Gastrocnemius medialis (tissue), 4 donors: ENCODE measurements at regions of chr2 and their contacts with region 1.

Region 1: GRCh38 chr2:237413777-237414661 is at the start of gene COL6A3:
- DNase-seq: peak; percentile 53 to 74
- ATAC-seq: peak; percentile 45 to 52
- H3K4me3 ChIP-seq: peak within 1 kb of the TSS; percentile 27 to 54 (median 36)
- H3K27ac ChIP-seq: peak within 1 kb of the TSS; percentile 71 to 80 (median 77)
- H3K4me1 ChIP-seq: peaks cover 0 to 4% of the 10 kb centered on the region in 2 donors
- H3K27me3 ChIP-seq: no peaks in the 10 kb centered on the region
- CTCF ChIP-seq: no peak
- POLR2A ChIP-seq: peak; percentile 21 to 54
- total RNA-seq, gene COL6A3: 45.3 to 150 (median 108) TPM

Region 2: DNA sequence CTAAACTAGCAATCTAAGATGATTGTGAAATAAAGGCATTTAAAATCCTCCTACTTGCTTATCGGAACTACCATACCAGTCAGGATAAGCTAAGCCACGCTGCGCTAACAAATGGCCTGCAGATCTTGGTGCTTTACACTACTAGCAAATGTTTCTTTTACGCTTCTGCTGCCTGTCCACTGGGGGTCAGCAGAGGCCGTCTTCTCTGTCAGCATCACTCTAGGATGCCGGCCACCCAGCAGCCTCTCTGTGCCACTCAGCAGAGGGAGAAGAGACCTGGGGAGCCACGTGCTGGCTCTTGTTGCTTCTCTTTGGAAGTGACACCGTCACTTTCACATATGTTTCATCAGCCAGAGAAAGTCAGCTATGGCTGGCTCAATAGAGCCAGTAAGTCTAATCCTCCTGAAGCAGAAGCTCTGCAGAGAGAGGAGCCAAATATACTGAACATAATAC is 291.8 kb before region 1 on chr2:
- in situ Hi-C with region 1: loop called in 2 of 4 experiments (anchors 10 kb)
- intact Hi-C with region 1: loop called (anchors 5 kb)
- DNase-seq: peak; percentile 49 to 73
- ATAC-seq: peak; percentile 54 to 76
- H3K4me3 ChIP-seq: no peak overlapping the region
- H3K27ac ChIP-seq: peak overlapping the region in 2 of 4 donors; percentile 24 to 39
- H3K4me1 ChIP-seq: peaks cover 11 to 13% of the 10 kb centered on the region in 2 donors
- H3K27me3 ChIP-seq: no peaks in the 10 kb centered on the region
- CTCF ChIP-seq: peak; percentile 66 to 77 (median 70)
- POLR2A ChIP-seq: no peak

Region 3: DNA sequence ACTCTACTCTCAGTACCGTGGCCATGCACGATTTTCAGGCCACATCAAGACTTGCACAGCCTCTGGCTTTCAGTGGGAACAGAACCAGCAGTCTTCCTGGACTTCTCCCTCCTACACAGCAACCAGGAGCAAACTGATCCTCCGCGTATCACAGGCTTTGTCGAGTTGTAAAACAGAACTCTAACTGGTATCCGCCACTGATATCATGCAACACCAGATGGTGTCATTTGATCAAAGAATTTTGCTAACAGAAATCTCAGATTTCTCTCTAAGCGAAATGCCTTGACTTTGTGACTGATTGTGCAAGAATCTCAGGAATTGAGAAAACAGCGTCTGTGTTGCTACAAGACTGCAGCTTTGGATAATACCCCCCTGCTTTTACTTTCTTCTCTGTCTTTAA is 242.6 kb before region 1 on chr2:
- in situ Hi-C with region 1: loop called in 1 of 4 experiments (anchors 10 kb)
- intact Hi-C with region 1: loop called (anchors 2 kb)
- DNase-seq: peak in 1 of 2 donors; percentile 43
- ATAC-seq: peak; percentile 81 to 83
- H3K4me3 ChIP-seq: no peak overlapping the region
- H3K27ac ChIP-seq: peak overlapping the region; percentile 54 to 66 (median 56)
- H3K4me1 ChIP-seq: peaks cover 0 to 4% of the 10 kb centered on the region in 2 donors
- H3K27me3 ChIP-seq: no peaks in the 10 kb centered on the region
- CTCF ChIP-seq: no peak
- POLR2A ChIP-seq: peak in 1 of 2 donors; percentile 21

Region 4: GRCh38 chr2:237231593-237231992 is 182.4 kb before region 1 on chr2:
- in situ Hi-C with region 1: no loop called
- intact Hi-C with region 1: loop called (anchors 5 kb)
- DNase-seq: peak in 1 of 2 donors; percentile 64
- ATAC-seq: peak; percentile 1 to 12
- H3K4me3 ChIP-seq: no peak overlapping the region
- H3K27ac ChIP-seq: peak overlapping the region; percentile 56 to 75 (median 66)
- H3K4me1 ChIP-seq: peaks cover 11 to 29% of the 10 kb centered on the region in 2 donors
- H3K27me3 ChIP-seq: no peaks in the 10 kb centered on the region
- CTCF ChIP-seq: no peak
- POLR2A ChIP-seq: no peak

Region 5: GRCh38 chr2:237374284-237375060 is 39.5 kb before region 1 on chr2:
- in situ Hi-C with region 1: no loop called
- intact Hi-C with region 1: no loop called
- DNase-seq: no peak
- ATAC-seq: no peak
- H3K4me3 ChIP-seq: no peak overlapping the region
- H3K27ac ChIP-seq: peak overlapping the region in 1 of 4 donors; percentile 9
- H3K4me1 ChIP-seq: no peaks in the 10 kb centered on the region
- H3K27me3 ChIP-seq: no peaks in the 10 kb centered on the region
- CTCF ChIP-seq: no peak
- POLR2A ChIP-seq: no peak

Region 6: GRCh38 chr2:237427769-237428506 is 13.9 kb after region 1 on chr2:
- in situ Hi-C with region 1: no loop called
- intact Hi-C with region 1: no loop called
- DNase-seq: no peak
- ATAC-seq: no peak
- H3K4me3 ChIP-seq: no peak overlapping the region
- H3K27ac ChIP-seq: no peak overlapping the region
- H3K4me1 ChIP-seq: no peaks in the 10 kb centered on the region
- H3K27me3 ChIP-seq: no peaks in the 10 kb centered on the region
- CTCF ChIP-seq: no peak
- POLR2A ChIP-seq: no peak